ENCODE measurements at regions of chr15 and their contacts with region 1.

Region 1: GRCh38 chr15:39874890-39875549 is 45.0 kb downstream of the GPR176 start:
- DNase-seq: peak; percentile 69
- H3K4me3 Mint-ChIP-seq: no peak overlapping the region
- H3K27ac Mint-ChIP-seq: no peak overlapping the region
- H3K4me1 Mint-ChIP-seq: peaks cover 3% of the 10 kb centered on the region
- H3K27me3 Mint-ChIP-seq: peaks cover 16% of the 10 kb centered on the region

Region 2: GRCh38 chr15:39686000-39686613 is 188.9 kb before region 1 on chr15:
- intact Hi-C with region 1: loop called (anchors 10 kb)
- DNase-seq: peak; percentile 77
- H3K4me3 Mint-ChIP-seq: no peak overlapping the region
- H3K27ac Mint-ChIP-seq: no peak overlapping the region
- H3K4me1 Mint-ChIP-seq: peaks cover 3% of the 10 kb centered on the region
- H3K27me3 Mint-ChIP-seq: peaks cover 11% of the 10 kb centered on the region

Region 3: DNA sequence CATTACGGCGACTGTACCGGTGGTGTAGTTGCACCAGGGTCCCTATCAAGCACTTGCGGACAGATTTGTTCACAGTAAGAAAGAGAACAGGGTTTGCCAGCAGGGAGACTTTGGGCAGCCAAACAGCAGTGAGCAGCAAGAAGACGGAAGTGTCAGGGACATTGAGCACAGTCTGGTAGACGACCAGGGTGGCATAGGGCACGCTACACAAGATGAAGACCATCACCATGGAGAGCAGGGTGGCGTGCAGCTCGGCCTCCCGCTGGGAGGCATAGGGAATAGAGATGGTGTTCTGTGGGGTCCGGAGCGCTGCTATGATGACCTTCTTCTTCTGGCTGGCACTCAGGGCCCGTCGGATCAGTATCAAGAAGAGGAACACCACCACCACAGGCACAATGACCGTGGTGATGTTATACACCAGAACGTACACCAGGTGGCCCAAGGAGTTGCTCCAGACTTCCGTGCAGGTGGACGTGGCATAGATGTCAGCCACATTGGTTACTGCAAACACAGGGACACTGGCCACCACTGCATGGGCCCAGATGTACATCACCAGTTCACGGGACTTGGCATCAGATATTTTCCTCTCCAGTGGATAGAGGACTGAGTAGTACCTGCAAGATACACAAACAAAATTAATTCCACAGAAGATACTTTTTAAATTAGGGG is 73.2 kb before region 1 on chr15:
- intact Hi-C with region 1: loop called (anchors 5 kb)
- DNase-seq: peak; percentile 67
- H3K4me3 Mint-ChIP-seq: no peak overlapping the region
- H3K27ac Mint-ChIP-seq: no peak overlapping the region
- H3K4me1 Mint-ChIP-seq: no peaks in the 10 kb centered on the region
- H3K27me3 Mint-ChIP-seq: peaks cover 20% of the 10 kb centered on the region

Region 4: DNA sequence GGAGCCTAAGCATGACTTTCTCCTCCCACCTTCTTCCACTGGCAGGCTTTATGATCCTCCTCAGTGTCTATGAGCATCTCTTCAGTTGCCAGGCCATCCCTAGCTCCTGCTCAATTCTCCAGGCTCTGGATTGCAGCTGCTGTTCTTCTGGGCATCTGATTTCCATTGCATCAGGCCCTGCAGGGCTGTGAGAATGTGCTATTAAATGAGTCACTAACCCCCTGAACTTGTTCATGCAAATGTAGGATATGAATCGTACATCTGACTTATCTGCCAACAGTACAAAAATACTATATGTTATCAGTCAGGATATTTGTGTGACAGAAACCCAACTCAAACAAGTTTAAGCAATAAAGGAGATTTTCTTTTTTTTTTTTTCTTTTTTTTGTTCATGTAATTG is 33.2 kb after region 1 on chr15:
- intact Hi-C with region 1: no loop called
- DNase-seq: no peak
- H3K4me3 Mint-ChIP-seq: no peak overlapping the region
- H3K27ac Mint-ChIP-seq: no peak overlapping the region
- H3K4me1 Mint-ChIP-seq: no peaks in the 10 kb centered on the region
- H3K27me3 Mint-ChIP-seq: peaks cover 27% of the 10 kb centered on the region

Region 5: DNA sequence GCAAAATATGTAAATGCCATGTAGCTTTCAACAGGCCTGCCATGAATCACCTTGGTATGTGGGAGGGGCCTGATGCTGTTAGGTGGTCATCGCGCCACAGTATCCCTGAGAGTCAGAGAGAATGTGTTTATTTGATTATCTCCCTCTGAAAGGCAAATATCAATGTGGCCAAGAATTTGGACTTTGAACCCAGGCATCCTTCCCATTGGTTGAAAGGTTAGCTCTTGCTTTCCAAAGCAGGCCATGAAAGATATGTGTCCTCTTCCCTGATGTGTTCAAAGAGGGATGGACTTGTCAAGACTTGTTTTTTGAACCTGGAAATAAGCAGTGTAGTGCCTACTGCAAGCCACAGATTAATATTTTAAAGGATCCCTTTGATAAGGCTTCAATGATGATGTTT is 127.3 kb after region 1 on chr15:
- intact Hi-C with region 1: no loop called
- DNase-seq: no peak
- H3K4me3 Mint-ChIP-seq: no peak overlapping the region
- H3K27ac Mint-ChIP-seq: no peak overlapping the region
- H3K4me1 Mint-ChIP-seq: peaks cover 4% of the 10 kb centered on the region
- H3K27me3 Mint-ChIP-seq: no peaks in the 10 kb centered on the region

Measured in activated CD4-positive, alpha-beta T cell treated with anti-CD3 and anti-CD28 coated beads, Interleukin-2, amount 10 ng/mL, durations not matched to agents 24 days and 14 days (primary cell).